CD8-positive, alpha-beta T cell (primary cell): ENCODE measurements at regions of chr5 and their contacts with region 1.

Region 1: GRCh38 chr5:178075840-178076548 is 37.3 kb upstream of the N4BP3 start:
- DNase-seq: peak; percentile 66 to 89 (median 83)
- ATAC-seq: peak; percentile 94
- H3K4me3 ChIP-seq: no peak overlapping the region
- H3K4me3 Mint-ChIP-seq: peak overlapping the region; percentile 39
- H3K27ac ChIP-seq: no peak overlapping the region
- H3K27ac Mint-ChIP-seq: no peak overlapping the region
- H3K4me1 ChIP-seq: peaks cover 5% of the 10 kb centered on the region
- H3K4me1 Mint-ChIP-seq: peaks cover 6% of the 10 kb centered on the region
- H3K27me3 ChIP-seq: no peaks in the 10 kb centered on the region
- H3K27me3 Mint-ChIP-seq: no peaks in the 10 kb centered on the region
- CTCF ChIP-seq: peak; percentile 98

Region 2: GRCh38 chr5:178058321-178059012 is 17.5 kb before region 1 on chr5:
- CTCF ChIA-PET with region 1: interaction called, 15 read pairs
- POLR2A ChIA-PET with region 1: no interaction called
- intact Hi-C with region 1: no loop called
- DNase-seq: no peak
- ATAC-seq: no peak
- H3K4me3 ChIP-seq: no peak overlapping the region
- H3K4me3 Mint-ChIP-seq: no peak overlapping the region
- H3K27ac ChIP-seq: no peak overlapping the region
- H3K27ac Mint-ChIP-seq: no peak overlapping the region
- H3K4me1 ChIP-seq: peaks cover 5% of the 10 kb centered on the region
- H3K4me1 Mint-ChIP-seq: peaks cover 5% of the 10 kb centered on the region
- H3K27me3 ChIP-seq: no peaks in the 10 kb centered on the region
- H3K27me3 Mint-ChIP-seq: no peaks in the 10 kb centered on the region
- CTCF ChIP-seq: no peak

Region 3: DNA sequence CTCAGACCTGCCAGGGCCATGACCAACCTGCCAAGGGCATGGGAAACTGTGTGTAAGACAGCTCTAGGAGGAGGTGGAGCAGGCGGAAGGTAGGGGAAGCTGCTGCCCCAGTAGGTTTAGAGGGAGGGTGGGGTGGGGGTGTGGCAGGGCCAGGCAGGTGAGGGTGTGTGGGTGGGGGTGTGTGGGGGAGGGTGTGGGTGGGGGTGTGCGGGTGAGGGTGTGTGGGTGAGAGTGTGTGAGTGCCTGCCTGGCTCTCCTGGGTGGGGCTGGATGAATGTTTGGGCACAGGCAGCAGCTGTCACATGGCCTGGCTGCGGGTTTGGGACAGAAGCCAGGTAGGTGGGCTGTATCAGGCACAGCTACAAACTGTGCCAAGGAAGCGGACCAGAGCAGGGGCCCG is 28.5 kb after region 1 on chr5:
- CTCF ChIA-PET with region 1: interaction called, 20 read pairs
- POLR2A ChIA-PET with region 1: no interaction called
- intact Hi-C with region 1: no loop called
- DNase-seq: peak in 2 of 9 experiments; percentile 25 to 34
- ATAC-seq: peak; percentile 17
- H3K4me3 ChIP-seq: no peak overlapping the region
- H3K4me3 Mint-ChIP-seq: no peak overlapping the region
- H3K27ac ChIP-seq: no peak overlapping the region
- H3K27ac Mint-ChIP-seq: no peak overlapping the region
- H3K4me1 ChIP-seq: peaks cover 15% of the 10 kb centered on the region
- H3K4me1 Mint-ChIP-seq: peaks cover 16% of the 10 kb centered on the region
- H3K27me3 ChIP-seq: no peaks in the 10 kb centered on the region
- H3K27me3 Mint-ChIP-seq: no peaks in the 10 kb centered on the region
- CTCF ChIP-seq: no peak

Region 4: DNA sequence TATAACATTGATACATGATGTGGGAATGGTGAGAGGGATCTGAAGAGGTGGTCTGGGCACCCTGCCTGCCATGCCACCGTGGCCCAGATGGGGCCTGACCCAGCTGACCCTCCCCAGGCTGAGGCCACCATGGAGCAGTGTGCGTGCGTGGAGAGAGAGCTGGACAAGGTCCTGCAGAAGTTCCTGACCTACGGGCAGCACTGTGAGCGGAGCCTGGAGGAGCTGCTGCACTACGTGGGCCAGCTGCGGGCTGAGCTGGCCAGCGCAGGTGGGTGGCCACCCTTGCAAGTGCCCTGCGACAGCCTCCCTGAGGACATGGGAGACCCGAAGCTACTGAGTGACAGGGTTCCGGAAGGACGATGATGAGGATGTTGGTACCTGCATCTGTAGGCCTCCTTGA is 62.0 kb after region 1 on chr5:
- CTCF ChIA-PET with region 1: interaction called, 411 read pairs
- POLR2A ChIA-PET with region 1: no interaction called
- intact Hi-C with region 1: no loop called
- DNase-seq: no peak
- ATAC-seq: no peak
- H3K4me3 ChIP-seq: no peak overlapping the region
- H3K4me3 Mint-ChIP-seq: no peak overlapping the region
- H3K27ac ChIP-seq: no peak overlapping the region
- H3K27ac Mint-ChIP-seq: no peak overlapping the region
- H3K4me1 ChIP-seq: no peaks in the 10 kb centered on the region
- H3K4me1 Mint-ChIP-seq: peaks cover 24% of the 10 kb centered on the region
- H3K27me3 ChIP-seq: no peaks in the 10 kb centered on the region
- H3K27me3 Mint-ChIP-seq: no peaks in the 10 kb centered on the region
- CTCF ChIP-seq: no peak

Region 5: DNA sequence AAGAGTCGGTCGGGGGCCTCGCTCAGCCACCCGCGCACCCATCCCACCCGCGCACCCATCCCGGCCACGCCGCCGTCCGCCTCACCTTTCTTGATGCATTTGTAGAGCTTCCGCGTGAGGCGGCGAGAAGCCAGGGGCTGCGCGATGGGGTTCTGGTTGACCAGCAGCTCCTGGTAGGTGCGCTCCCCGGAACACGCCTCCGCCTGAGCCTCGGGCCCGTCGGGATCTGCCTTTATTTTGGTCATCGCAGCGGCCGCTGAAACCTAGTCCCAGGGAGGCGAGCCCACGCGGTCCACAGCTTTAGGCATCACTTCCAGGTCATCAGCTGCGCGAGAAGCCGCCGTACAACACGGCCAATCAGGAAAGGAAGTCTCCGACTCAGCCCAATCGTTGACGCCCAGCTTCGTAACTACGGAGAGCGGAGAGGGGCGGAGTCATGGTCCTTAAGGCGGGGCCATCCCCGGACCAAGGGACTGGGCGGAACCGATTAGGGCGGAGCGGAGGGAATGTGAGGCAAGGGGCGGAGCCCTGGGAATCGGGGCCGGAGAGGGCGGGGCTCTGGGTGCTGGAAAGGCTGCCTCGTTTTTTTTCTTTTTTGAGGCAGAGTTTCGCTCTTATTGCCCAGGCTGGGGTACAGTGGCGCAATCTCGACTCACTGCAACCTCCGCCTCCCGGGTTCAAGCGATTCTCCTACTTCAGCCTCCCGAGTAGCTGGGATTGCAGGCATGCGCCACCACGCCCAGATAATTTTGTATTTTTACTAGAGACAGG is 77.8 kb after region 1 on chr5 and contains the start of gene NHP2:
- CTCF ChIA-PET with region 1: interaction called, 411 read pairs
- POLR2A ChIA-PET with region 1: interaction called, 4 read pairs
- intact Hi-C with region 1: no loop called
- DNase-seq: peak; percentile 92 to 98 (median 97)
- ATAC-seq: peak; percentile 99
- H3K4me3 ChIP-seq: peak within 1 kb of the TSS; percentile 81 to 94
- H3K4me3 Mint-ChIP-seq: peak within 1 kb of the TSS; percentile 97
- H3K27ac ChIP-seq: peak within 1 kb of the TSS; percentile 51 to 62
- H3K27ac Mint-ChIP-seq: peak within 1 kb of the TSS; percentile 92
- H3K4me1 ChIP-seq: peaks cover 12% of the 10 kb centered on the region
- H3K4me1 Mint-ChIP-seq: peaks cover 26% of the 10 kb centered on the region
- H3K27me3 ChIP-seq: no peaks in the 10 kb centered on the region
- H3K27me3 Mint-ChIP-seq: no peaks in the 10 kb centered on the region
- CTCF ChIP-seq: no peak
- total RNA-seq, gene NHP2: 48.8 to 49.6 TPM

Region 6: DNA sequence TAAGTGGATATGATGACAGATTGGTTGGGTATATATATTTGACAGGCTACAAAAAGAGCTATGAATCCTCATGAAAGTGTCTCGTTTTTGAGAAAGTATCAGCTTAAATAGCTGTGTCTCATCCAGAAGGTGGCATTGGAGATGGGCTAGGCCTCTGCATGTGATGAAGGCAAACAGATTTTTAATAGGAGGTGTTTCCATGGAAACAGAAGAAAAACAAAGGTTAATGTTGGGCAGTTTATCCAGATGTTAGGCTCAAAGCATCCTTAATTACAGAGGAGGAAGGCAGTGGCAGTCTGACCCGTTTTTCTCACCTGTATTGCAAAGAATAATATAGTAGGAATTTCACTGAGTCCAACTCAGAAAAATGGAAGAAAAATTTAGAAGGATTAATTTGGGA is 95.0 kb after region 1 on chr5:
- CTCF ChIA-PET with region 1: interaction called, 52 read pairs
- POLR2A ChIA-PET with region 1: no interaction called
- intact Hi-C with region 1: no loop called
- DNase-seq: no peak
- ATAC-seq: no peak
- H3K4me3 ChIP-seq: no peak overlapping the region
- H3K4me3 Mint-ChIP-seq: no peak overlapping the region
- H3K27ac ChIP-seq: no peak overlapping the region
- H3K27ac Mint-ChIP-seq: no peak overlapping the region
- H3K4me1 ChIP-seq: no peaks in the 10 kb centered on the region
- H3K4me1 Mint-ChIP-seq: no peaks in the 10 kb centered on the region
- H3K27me3 ChIP-seq: no peaks in the 10 kb centered on the region
- H3K27me3 Mint-ChIP-seq: no peaks in the 10 kb centered on the region
- CTCF ChIP-seq: no peak